Posterior cingulate gyrus (tissue), 11 donors: ENCODE measurements at regions of chr22 and their contacts with region 1.

Region 1: DNA sequence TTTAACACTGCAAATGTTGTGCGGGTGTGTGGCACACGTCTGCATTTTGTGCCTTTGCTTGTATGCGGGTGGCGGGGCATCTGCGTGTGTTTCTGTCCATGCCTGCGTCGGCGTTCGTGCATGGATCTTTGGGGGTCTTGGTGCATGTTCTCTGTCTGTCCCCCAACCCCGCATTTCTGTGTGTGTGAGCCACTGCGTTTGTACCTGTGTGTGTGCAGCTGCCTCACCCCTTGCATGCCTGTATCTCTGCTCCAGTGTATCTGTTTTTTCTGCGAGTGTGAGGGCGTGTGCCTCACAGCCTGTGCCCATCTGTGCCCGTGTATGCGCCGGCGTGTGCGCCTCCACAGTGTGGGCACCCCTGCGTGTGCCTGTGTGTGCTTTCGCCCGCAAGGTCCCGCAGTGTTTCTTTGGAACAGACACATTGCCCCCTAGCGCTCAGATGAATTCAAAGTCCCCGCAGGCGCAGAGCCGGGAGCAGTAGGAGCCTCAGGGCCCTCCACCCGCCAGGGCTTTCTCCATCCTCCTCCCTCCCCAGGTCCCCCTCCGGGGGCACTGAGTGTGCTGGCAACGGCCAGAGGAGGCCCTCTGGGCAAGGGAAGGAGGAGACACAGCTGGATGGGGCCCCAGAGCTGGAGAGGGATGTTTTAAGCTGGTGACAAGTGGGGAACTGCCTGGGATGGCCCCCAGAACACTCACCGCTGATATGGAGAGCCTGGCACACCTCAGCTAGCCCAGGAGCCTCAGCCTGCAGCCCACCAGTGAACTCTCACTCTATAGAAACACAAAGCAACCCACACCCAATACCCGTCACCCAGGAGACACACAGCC is 3.1 kb upstream of the MN1 start:
- DNase-seq: peak; percentile 70 to 96 (median 82)

Region 2: GRCh38 chr22:26679003-26679629 is 1125.6 kb before region 1 on chr22:
- intact Hi-C with region 1: loop called (anchors 5 kb)
- DNase-seq: peak; percentile 60 to 96 (median 81)

Region 3: DNA sequence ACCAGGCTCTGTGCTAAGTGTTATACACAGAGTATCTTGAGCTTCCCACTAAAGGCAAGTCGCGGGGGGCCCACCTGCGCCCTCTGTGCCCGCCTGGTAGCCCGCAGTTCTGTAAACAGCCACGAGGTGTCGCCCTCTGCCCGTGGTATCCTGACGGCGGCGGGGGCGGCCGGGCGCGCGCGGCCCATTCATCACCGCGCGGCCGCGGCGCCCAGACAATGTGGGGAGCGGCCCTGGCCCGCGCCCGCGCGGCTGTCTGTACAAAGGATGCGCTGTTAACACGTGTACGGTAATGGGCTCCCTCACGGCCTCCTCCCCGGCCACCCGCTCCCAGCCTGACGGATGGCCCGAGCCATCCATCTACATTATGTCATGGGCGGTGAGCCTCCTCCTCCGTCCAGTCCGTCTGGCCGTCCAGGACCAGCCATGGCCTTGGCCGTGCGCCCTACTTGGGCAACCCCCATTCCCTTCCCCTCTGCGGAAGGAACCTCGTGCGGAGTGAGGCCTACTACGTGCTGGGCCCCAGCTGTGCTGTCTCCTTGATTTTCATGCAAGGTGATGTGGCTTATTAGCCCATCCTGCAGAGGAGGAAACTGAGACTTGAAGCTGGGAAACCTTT is 1047.9 kb before region 1 on chr22:
- intact Hi-C with region 1: loop called (anchors 2 kb)
- DNase-seq: peak in 9 of 10 donors; percentile 40 to 94 (median 66)

Region 4: GRCh38 chr22:27405672-27406388 is 398.9 kb before region 1 on chr22:
- intact Hi-C with region 1: loop called (anchors 5 kb)
- DNase-seq: peak in 7 of 10 donors; percentile 19 to 91 (median 53)

Region 5: DNA sequence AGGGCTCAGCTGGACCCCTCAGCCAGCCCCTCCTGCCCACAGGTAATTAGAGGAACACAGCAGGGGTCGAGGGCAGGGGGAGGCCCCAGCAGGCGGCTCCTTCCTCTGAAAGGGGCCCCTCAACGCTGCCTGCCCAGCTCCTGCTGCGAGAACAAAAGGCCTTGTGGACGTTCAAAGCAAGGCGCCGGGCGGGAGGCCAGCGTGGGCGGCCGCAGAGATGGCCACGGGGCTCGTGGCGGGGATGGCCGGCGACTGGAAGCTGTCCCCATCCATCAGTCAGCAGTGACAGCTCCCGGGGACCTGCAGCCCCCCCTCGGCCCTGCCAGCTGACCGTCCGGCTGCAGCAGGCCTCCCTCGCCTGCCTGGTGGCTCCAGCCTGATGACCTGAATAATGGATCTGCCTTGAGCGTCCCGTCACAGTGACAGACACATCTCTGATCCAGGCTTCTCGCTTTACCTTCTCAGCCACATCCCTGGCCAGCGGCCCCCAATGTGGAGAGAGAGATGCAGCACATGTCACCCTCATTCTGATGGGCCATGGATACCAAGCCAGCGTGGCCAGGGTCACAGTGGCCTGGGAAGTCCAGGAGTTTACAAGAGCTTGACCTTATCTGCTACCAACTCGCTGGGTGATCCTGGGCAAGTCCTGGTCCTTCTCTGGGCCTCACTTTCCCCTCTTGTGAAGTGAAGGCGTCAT is 162.4 kb before region 1 on chr22:
- intact Hi-C with region 1: loop called (anchors 5 kb)
- DNase-seq: peak; percentile 82 to 99 (median 90)

Region 6: GRCh38 chr22:27718186-27719032 is 86.3 kb before region 1 on chr22:
- intact Hi-C with region 1: loop called (anchors 5 kb)
- DNase-seq: peak in 2 of 10 donors; percentile 12 to 83